ENCODE measurements at regions of chr4 and their contacts with region 1.

Region 1: GRCh38 chr4:25180524-25181131 is 20.4 kb upstream of the SEPSECS start:
- DNase-seq: no peak
- H3K4me3 Mint-ChIP-seq: no peak overlapping the region
- H3K27ac Mint-ChIP-seq: no peak overlapping the region
- H3K4me1 Mint-ChIP-seq: peaks cover 29% of the 10 kb centered on the region
- H3K27me3 Mint-ChIP-seq: no peaks in the 10 kb centered on the region

Region 2: DNA sequence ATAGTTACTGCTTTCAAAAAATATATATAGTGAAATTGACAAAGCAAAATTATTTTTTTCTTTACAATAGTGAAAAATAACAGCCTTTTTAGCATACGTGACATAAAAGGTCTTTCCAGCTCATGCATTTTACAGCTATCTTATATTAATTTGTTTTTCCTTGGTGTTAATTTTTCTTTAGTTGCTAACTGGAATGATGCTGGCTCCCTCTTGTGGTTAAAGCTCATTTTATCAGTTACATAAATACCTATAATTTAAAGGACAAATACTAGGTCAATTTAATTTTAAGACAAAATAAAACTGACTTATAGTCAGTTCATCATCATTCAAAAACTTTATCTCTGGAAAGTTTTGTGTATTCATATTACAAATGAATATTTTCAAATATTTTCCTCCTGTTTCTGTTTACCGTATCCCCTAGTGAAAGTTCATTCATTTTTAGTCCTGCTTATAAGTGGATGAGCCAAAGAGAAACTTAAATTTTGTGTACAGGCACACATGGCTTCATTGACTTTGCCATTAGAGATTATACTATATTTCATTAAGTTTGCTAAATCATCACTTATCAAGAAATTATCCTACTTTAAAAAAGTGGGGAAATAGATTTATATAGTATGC is 186.5 kb after region 1 on chr4:
- intact Hi-C with region 1: loop called (anchors 1 kb)
- DNase-seq: no peak
- H3K4me3 Mint-ChIP-seq: no peak overlapping the region
- H3K27ac Mint-ChIP-seq: no peak overlapping the region
- H3K4me1 Mint-ChIP-seq: no peaks in the 10 kb centered on the region
- H3K27me3 Mint-ChIP-seq: no peaks in the 10 kb centered on the region